ENCODE measurements at regions of chr2 and their contacts with region 1.

Region 1: GRCh38 chr2:177338177-177338721 is 54.3 kb upstream of the AGPS start:
- DNase-seq: no peak
- ATAC-seq: no peak
- H3K4me3 ChIP-seq: no peak overlapping the region
- H3K4me3 Mint-ChIP-seq: no peak overlapping the region
- H3K27ac ChIP-seq: no peak overlapping the region
- H3K27ac Mint-ChIP-seq: no peak overlapping the region
- H3K4me1 ChIP-seq: no peaks in the 10 kb centered on the region
- H3K4me1 Mint-ChIP-seq: no peaks in the 10 kb centered on the region
- H3K27me3 ChIP-seq: no peaks in the 10 kb centered on the region
- H3K27me3 Mint-ChIP-seq: no peaks in the 10 kb centered on the region
- CTCF ChIP-seq: no peak

Region 2: GRCh38 chr2:177413703-177414102 is 75.5 kb after region 1 on chr2:
- CTCF ChIA-PET with region 1: interaction called, 10 read pairs
- POLR2A ChIA-PET with region 1: no interaction called
- intact Hi-C with region 1: loop called (anchors 1 kb)
- DNase-seq: no peak
- ATAC-seq: no peak
- H3K4me3 ChIP-seq: no peak overlapping the region
- H3K4me3 Mint-ChIP-seq: no peak overlapping the region
- H3K27ac ChIP-seq: no peak overlapping the region
- H3K27ac Mint-ChIP-seq: peak overlapping the region; percentile 11
- H3K4me1 ChIP-seq: no peaks in the 10 kb centered on the region
- H3K4me1 Mint-ChIP-seq: peaks cover 47% of the 10 kb centered on the region
- H3K27me3 ChIP-seq: no peaks in the 10 kb centered on the region
- H3K27me3 Mint-ChIP-seq: no peaks in the 10 kb centered on the region
- CTCF ChIP-seq: no peak

Region 3: GRCh38 chr2:177419274-177419673 is 81.0 kb after region 1 on chr2:
- CTCF ChIA-PET with region 1: interaction called, 10 read pairs
- POLR2A ChIA-PET with region 1: no interaction called
- intact Hi-C with region 1: loop called (anchors 1 kb)
- DNase-seq: no peak
- ATAC-seq: no peak
- H3K4me3 ChIP-seq: no peak overlapping the region
- H3K4me3 Mint-ChIP-seq: no peak overlapping the region
- H3K27ac ChIP-seq: no peak overlapping the region
- H3K27ac Mint-ChIP-seq: no peak overlapping the region
- H3K4me1 ChIP-seq: no peaks in the 10 kb centered on the region
- H3K4me1 Mint-ChIP-seq: peaks cover 29% of the 10 kb centered on the region
- H3K27me3 ChIP-seq: no peaks in the 10 kb centered on the region
- H3K27me3 Mint-ChIP-seq: no peaks in the 10 kb centered on the region
- CTCF ChIP-seq: no peak

Region 4: GRCh38 chr2:177604271-177605065 is 266.2 kb after region 1 on chr2:
- CTCF ChIA-PET with region 1: no interaction called
- POLR2A ChIA-PET with region 1: no interaction called
- intact Hi-C with region 1: loop called (anchors 2 to 10 kb)
- DNase-seq: peak in 3 of 14 experiments; percentile 5 to 40 (median 38)
- ATAC-seq: no peak
- H3K4me3 ChIP-seq: no peak overlapping the region
- H3K4me3 Mint-ChIP-seq: no peak overlapping the region
- H3K27ac ChIP-seq: no peak overlapping the region
- H3K27ac Mint-ChIP-seq: no peak overlapping the region
- H3K4me1 ChIP-seq: no peaks in the 10 kb centered on the region
- H3K4me1 Mint-ChIP-seq: no peaks in the 10 kb centered on the region
- H3K27me3 ChIP-seq: peaks cover 0 to 2% of the 10 kb centered on the region in 2 experiments
- H3K27me3 Mint-ChIP-seq: peaks cover 17% of the 10 kb centered on the region
- CTCF ChIP-seq: peak; percentile 44